Ovary (tissue), 10 donors: ENCODE measurements at regions of chr10 and their contacts with region 1.

Region 1: GRCh38 chr10:114012650-114013049 is 31.0 kb upstream of the ADRB1 start:
- DNase-seq: no peak
- H3K4me3 ChIP-seq: no peak overlapping the region
- H3K27ac ChIP-seq: no peak overlapping the region
- H3K4me1 ChIP-seq: no peaks in the 10 kb centered on the region
- H3K27me3 ChIP-seq: no peaks in the 10 kb centered on the region
- CTCF ChIP-seq: no peak
- EP300 ChIP-seq: no peak
- POLR2A ChIP-seq: no peak

Region 2: DNA sequence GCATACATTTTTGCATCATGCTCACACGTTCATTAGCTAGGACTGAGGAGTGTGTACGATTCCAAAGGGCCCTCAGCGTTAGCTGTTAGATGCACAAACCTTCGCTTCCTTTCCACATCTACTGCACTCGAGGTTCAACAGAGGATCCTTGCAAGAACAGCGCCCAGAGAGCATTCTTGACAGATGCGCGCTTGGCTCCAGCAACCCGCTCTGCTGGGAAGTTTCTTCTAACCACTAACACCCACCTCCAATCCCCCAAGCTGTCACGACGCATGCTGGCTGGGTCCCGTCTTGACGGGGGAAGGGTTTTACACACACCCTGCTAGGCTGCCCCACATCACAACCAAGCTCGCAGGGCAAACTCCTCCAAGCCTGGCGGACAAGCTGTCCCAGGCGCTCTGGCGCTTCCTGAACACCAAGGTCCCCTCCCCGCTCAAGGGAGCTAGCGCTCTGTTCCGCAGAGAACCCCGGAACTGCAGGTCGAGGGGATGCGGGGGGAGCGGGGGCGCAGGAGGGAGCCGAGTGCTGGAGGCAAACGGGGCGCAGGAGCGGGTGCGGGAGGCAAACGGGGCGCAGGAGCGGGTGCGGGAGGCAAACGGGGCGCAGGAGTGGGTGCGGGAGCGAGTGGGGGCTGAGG is 30.4 kb after region 1 on chr10:
- intact Hi-C with region 1: loop called in 1 of 4 experiments (anchors 1 kb)
- DNase-seq: no peak
- H3K4me3 ChIP-seq: peak overlapping the region; percentile 23
- H3K27ac ChIP-seq: no peak overlapping the region
- H3K4me1 ChIP-seq: peaks cover 4% of the 10 kb centered on the region
- H3K27me3 ChIP-seq: no peaks in the 10 kb centered on the region
- CTCF ChIP-seq: no peak
- EP300 ChIP-seq: no peak
- POLR2A ChIP-seq: no peak

Region 3: GRCh38 chr10:114073395-114074186 is 60.9 kb after region 1 on chr10:
- intact Hi-C with region 1: no loop called
- DNase-seq: no peak
- H3K4me3 ChIP-seq: no peak overlapping the region
- H3K27ac ChIP-seq: no peak overlapping the region
- H3K4me1 ChIP-seq: no peaks in the 10 kb centered on the region
- H3K27me3 ChIP-seq: no peaks in the 10 kb centered on the region
- CTCF ChIP-seq: no peak
- EP300 ChIP-seq: no peak
- POLR2A ChIP-seq: no peak